Panc1 (cell line): ENCODE measurements at regions of chr17 and their contacts with region 1.

Region 1: DNA sequence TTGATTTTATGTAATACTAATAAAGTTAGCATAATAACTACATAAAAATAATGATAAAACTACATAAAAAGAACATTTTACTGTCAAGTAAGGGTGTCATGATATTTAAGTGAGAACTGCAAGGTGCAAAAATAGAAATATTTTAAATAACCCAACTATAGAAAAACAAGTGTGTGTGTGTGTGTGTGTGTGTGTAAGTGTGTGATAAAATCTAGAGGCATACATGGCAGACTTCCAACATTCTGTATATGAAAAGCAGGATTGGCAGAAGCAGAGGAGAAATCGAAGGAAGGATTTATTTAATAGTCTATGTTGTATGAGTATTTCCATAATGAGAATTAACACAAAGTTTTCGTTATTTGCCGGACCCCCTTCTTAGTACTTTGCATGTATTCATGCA is 334.1 kb downstream of the KCNJ2 start:
- DNase-seq: no peak
- ATAC-seq: no peak
- H3K4me3 ChIP-seq: no peak overlapping the region
- H3K27ac ChIP-seq: no peak overlapping the region
- H3K4me1 ChIP-seq: no peaks in the 10 kb centered on the region
- H3K27me3 ChIP-seq: no peaks in the 10 kb centered on the region
- CTCF ChIP-seq: no peak

Region 2: GRCh38 chr17:70434536-70435490 is 68.6 kb before region 1 on chr17:
- CTCF ChIA-PET with region 1: no interaction called
- POLR2A ChIA-PET with region 1: no interaction called
- in situ Hi-C with region 1: no loop called
- intact Hi-C with region 1: loop called (anchors 5 kb)
- DNase-seq: no peak
- ATAC-seq: no peak
- H3K4me3 ChIP-seq: no peak overlapping the region
- H3K27ac ChIP-seq: no peak overlapping the region
- H3K4me1 ChIP-seq: no peaks in the 10 kb centered on the region
- H3K27me3 ChIP-seq: no peaks in the 10 kb centered on the region
- CTCF ChIP-seq: no peak